ENCODE measurements at regions of chr7 and their contacts with region 1.

Region 1: DNA sequence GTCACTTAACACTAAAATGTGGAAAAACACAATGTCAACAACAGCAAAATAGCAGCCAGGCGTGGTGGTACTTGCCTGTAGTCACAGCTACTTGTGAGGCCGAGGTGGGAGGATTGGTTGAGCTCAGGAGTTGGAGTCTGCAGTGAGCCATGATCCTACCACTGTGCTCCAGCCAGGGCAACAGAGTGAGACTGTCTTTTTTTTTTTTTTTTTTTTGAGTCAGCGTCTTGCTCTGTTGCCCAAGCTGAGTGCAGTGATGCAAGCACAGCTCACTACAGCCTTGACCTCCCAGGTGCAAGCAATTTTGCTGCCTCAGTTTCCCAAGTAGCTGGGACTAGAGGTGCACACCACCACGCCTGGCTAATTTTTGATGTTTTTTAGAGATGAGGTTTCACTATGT is 6.1 kb downstream of the KCTD7 start:
- DNase-seq: no peak
- ATAC-seq: no peak
- H3K4me3 ChIP-seq: no peak overlapping the region
- H3K4me3 Mint-ChIP-seq: no peak overlapping the region
- H3K27ac ChIP-seq: no peak overlapping the region
- H3K27ac Mint-ChIP-seq: no peak overlapping the region
- H3K4me1 ChIP-seq: peaks cover 45% of the 10 kb centered on the region
- H3K4me1 Mint-ChIP-seq: peaks cover 39% of the 10 kb centered on the region
- H3K27me3 ChIP-seq: no peaks in the 10 kb centered on the region
- H3K27me3 Mint-ChIP-seq: no peaks in the 10 kb centered on the region
- CTCF ChIP-seq: no peak

Region 2: DNA sequence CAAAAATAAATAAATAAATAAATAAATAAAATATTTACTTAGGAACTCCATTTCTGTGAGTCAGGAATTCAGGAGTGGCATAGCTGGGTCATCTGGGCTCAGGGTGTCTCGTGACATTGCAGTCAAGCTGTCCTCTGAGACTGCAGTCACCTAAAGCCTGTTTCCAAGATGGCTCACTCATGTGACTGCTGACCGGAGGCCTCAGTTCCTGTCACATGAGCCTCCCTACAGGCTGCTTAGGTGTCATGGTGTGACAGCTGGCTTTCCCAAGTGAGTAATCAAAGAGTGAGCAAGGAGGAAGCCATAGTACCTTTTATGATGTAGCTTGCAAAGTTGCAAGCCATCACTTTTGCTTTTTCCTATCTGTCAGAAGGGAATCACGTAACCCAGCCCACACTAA is 134.7 kb before region 1 on chr7:
- CTCF ChIA-PET with region 1: no interaction called
- POLR2A ChIA-PET with region 1: no interaction called
- intact Hi-C with region 1: no loop called
- DNase-seq: peak in 1 of 14 experiments; percentile 44
- ATAC-seq: no peak
- H3K4me3 ChIP-seq: no peak overlapping the region
- H3K4me3 Mint-ChIP-seq: no peak overlapping the region
- H3K27ac ChIP-seq: no peak overlapping the region
- H3K27ac Mint-ChIP-seq: no peak overlapping the region
- H3K4me1 ChIP-seq: no peaks in the 10 kb centered on the region
- H3K4me1 Mint-ChIP-seq: peaks cover 5% of the 10 kb centered on the region
- H3K27me3 ChIP-seq: no peaks in the 10 kb centered on the region
- H3K27me3 Mint-ChIP-seq: no peaks in the 10 kb centered on the region
- CTCF ChIP-seq: no peak

Region 3: DNA sequence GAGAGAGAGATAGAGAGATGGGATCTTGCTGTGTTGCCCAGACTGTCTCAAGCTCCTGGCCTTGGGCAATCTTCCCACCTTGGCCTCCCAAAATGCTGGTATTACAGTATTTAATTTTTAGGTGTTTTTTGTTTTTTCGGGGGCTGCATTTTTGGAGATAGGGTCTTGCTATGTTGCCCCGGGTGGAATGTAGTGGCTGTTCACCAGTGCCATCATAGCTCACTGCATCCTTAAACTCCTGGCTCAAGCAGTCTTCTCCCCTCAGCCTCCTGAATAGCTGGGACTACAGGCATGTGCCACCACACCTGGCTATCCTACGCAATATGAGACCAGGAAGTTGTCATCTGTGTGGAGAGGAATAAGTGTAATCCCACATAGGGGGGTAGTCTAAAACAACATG is 36.2 kb after region 1 on chr7:
- CTCF ChIA-PET with region 1: no interaction called
- POLR2A ChIA-PET with region 1: interaction called, 5 read pairs
- intact Hi-C with region 1: loop called (anchors 2 to 5 kb)
- DNase-seq: no peak
- ATAC-seq: no peak
- H3K4me3 ChIP-seq: no peak overlapping the region
- H3K4me3 Mint-ChIP-seq: no peak overlapping the region
- H3K27ac ChIP-seq: no peak overlapping the region
- H3K27ac Mint-ChIP-seq: no peak overlapping the region
- H3K4me1 ChIP-seq: no peaks in the 10 kb centered on the region
- H3K4me1 Mint-ChIP-seq: no peaks in the 10 kb centered on the region
- H3K27me3 ChIP-seq: no peaks in the 10 kb centered on the region
- H3K27me3 Mint-ChIP-seq: no peaks in the 10 kb centered on the region
- CTCF ChIP-seq: no peak

Region 4: DNA sequence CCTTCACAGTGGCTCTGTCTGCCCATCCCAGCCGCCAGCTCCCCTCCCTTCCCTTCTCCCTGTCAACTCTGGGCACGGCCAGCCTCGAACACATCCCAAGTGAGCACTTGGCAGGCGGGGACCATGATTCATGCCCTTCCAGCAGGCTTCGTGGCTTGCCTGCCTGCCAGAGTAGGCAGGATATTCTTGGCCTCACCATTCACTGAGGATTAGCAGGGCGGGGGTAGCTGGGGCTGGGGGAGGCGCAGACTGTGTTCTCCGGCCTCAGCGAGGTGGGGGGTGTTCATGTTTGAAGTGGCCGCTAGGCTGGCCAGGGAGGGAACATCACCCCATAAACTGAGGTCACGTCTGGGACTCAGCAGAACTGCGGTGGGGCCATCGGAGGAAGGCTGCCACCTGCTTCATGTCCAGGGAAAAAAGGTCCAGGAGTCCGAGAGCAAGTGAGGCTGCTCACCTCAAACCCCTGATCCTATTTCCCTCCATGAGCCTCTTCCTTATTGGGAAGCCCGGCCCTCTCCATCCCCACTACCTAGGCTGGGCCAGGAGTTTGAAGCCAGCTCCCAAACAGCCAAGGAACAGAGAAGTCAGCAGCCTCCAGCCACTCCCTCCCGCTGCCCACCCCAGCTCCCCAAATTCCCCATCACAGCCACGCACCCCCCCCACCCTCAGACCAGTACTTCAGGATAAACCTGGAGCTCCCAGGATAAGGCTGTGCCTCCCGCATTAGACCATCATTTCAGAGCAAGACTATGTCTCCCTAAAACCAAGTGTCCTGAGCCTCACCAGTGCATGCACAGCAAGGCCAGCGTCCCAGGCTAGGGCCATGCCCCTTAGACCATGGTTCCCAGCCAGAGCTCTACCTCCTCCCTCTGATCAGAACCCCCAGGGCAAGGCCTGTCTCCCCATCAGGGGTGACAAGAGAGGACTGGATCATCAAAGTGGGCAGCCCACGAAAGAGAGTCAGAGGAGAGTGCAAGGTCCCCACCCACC is 62.9 kb after region 1 on chr7:
- CTCF ChIA-PET with region 1: no interaction called
- POLR2A ChIA-PET with region 1: no interaction called
- intact Hi-C with region 1: no loop called
- DNase-seq: no peak
- ATAC-seq: peak; percentile 13
- H3K4me3 ChIP-seq: no peak overlapping the region
- H3K4me3 Mint-ChIP-seq: no peak overlapping the region
- H3K27ac ChIP-seq: no peak overlapping the region
- H3K27ac Mint-ChIP-seq: no peak overlapping the region
- H3K4me1 ChIP-seq: no peaks in the 10 kb centered on the region
- H3K4me1 Mint-ChIP-seq: no peaks in the 10 kb centered on the region
- H3K27me3 ChIP-seq: no peaks in the 10 kb centered on the region
- H3K27me3 Mint-ChIP-seq: no peaks in the 10 kb centered on the region
- CTCF ChIP-seq: no peak